Tibial artery (tissue), 4 donors: ENCODE measurements at regions of chr20 and their contacts with region 1.

Region 1: DNA sequence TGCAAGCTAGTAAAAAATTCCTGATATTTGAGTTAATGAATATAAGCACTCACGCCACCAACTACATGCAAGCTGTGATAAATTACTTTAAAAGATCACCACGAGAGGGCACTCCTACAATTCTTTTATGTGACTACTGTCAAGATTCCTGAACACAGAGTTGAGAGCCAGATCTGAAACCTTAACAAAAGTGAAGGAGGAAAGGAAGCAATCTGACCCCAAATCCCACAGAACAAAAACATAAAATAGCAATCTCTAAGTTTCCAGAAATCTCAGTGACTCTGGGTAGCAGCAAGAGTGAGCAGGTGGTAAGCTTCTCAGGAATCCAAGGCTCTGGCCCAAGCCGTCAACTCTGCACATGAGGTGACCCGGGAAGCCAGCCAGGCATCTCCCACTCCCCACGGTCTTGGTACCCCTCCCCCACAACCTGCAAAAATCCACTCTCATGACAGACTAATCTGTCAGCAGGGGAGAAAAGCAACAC is 55.1 kb downstream of the STAU1 start:
- DNase-seq: no peak
- H3K4me3 ChIP-seq: no peak overlapping the region
- H3K27ac ChIP-seq: peak overlapping the region in 1 of 2 donors; percentile 23
- H3K4me1 ChIP-seq: peaks cover 0 to 5% (median 2%) of the 10 kb centered on the region in 4 donors
- H3K27me3 ChIP-seq: no peaks in the 10 kb centered on the region
- CTCF ChIP-seq: peak; percentile 55 to 76

Region 2: GRCh38 chr20:49203746-49204145 is 70.7 kb after region 1 on chr20:
- intact Hi-C with region 1: no loop called
- DNase-seq: no peak
- H3K4me3 ChIP-seq: no peak overlapping the region
- H3K27ac ChIP-seq: no peak overlapping the region
- H3K4me1 ChIP-seq: no peaks in the 10 kb centered on the region
- H3K27me3 ChIP-seq: no peaks in the 10 kb centered on the region
- CTCF ChIP-seq: no peak

Region 3: GRCh38 chr20:49216991-49217578 is 84.0 kb after region 1 on chr20:
- intact Hi-C with region 1: loop called (anchors 2 kb)
- DNase-seq: peak; percentile 94 to 97
- H3K4me3 ChIP-seq: no peak overlapping the region
- H3K27ac ChIP-seq: peak overlapping the region in 1 of 2 donors; percentile 40
- H3K4me1 ChIP-seq: peaks cover 0 to 20% (median 15%) of the 10 kb centered on the region in 4 donors
- H3K27me3 ChIP-seq: no peaks in the 10 kb centered on the region
- CTCF ChIP-seq: peak; percentile 83 to 93

Region 4: DNA sequence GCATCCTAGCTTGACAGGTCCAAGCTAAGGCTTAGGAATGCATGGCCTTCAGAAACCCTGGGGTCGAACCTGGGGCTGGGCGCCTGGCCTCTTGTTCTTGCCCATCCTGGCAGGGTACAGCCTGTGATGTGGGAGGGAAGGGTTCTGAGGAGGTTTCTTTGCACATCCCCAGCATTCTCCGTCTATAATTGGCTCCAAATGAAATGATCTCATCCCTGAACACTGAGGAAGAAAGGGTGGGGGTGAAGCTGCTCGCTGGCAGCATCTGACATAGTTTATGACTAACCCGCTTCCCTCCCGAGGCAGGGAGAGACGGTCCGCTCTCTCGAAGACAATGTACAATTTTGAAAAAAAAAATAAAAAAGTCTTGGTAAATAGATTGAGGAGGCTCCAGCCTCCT is 211.9 kb after region 1 on chr20:
- intact Hi-C with region 1: no loop called
- DNase-seq: peak; percentile 78 to 86
- H3K4me3 ChIP-seq: no peak overlapping the region
- H3K27ac ChIP-seq: peak overlapping the region; percentile 58 to 59
- H3K4me1 ChIP-seq: peaks cover 0 to 28% (median 17%) of the 10 kb centered on the region in 4 donors
- H3K27me3 ChIP-seq: no peaks in the 10 kb centered on the region
- CTCF ChIP-seq: no peak

Region 5: GRCh38 chr20:49356676-49357075 is 223.6 kb after region 1 on chr20:
- intact Hi-C with region 1: no loop called
- DNase-seq: no peak
- H3K4me3 ChIP-seq: no peak overlapping the region
- H3K27ac ChIP-seq: no peak overlapping the region
- H3K4me1 ChIP-seq: no peaks in the 10 kb centered on the region
- H3K27me3 ChIP-seq: no peaks in the 10 kb centered on the region
- CTCF ChIP-seq: no peak